Stomach (tissue), 19 donors: ENCODE measurements at regions of chr6 and their contacts with region 1.

Region 1: DNA sequence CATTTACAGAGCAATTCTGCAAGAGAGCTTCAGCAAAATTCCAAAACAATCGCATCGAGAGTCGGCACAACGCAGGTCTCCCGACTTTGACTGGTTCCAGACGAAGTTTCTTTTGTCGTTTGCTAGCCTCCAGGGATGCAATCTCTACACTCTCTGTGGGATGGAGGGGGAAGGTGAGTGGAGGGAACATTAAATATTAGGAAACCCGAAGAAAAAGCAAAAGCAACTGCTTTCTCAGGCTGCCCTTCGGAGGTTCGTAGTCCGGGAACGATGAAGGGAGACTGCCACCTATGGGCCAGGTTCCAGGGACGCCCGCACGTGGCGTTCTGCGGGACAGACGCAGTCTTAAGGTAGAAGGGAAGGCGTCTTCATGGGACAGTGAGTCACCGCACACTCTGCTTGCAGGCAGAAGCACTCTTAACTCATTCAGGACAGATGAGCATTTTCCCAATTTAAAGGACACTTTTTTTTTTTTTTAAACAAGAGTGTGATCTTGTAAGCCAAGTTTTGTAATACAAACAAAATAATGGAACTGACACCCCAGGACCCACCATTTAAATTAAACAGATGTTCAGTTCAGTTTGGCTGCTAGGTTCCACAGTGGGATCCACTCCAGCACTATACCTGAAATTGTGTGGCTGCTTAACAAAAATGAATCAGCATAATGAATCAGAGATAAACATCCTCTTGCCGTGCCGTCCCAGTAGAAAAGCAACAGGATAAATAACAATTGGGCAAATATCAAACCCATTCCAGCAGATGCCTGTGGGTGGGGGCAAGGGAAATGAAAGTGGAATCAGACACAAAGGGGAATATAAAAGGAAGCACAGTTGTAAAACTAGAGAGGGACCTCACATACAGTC is 65.8 kb upstream of the ARMC2 start:
- DNase-seq: peak; percentile 91 to 93
- H3K4me3 ChIP-seq: peak overlapping the region; percentile 46 to 56 (median 47)
- H3K27ac ChIP-seq: peak overlapping the region; percentile 47 to 79 (median 59)
- H3K4me1 ChIP-seq: peaks cover 7 to 23% (median 18%) of the 10 kb centered on the region in 4 donors
- H3K27me3 ChIP-seq: no peaks in the 10 kb centered on the region
- CTCF ChIP-seq: peak in 5 of 7 experiments; percentile 49 to 84 (median 83)
- EP300 ChIP-seq: no peak
- POLR2A ChIP-seq: no peak

Region 2: GRCh38 chr6:108549732-108550131 is 232.7 kb before region 1 on chr6:
- intact Hi-C with region 1: loop called (anchors 5 kb)
- DNase-seq: no peak
- H3K4me3 ChIP-seq: no peak overlapping the region
- H3K27ac ChIP-seq: no peak overlapping the region
- H3K4me1 ChIP-seq: peaks cover 0 to 4% (median 0%) of the 10 kb centered on the region in 4 donors
- H3K27me3 ChIP-seq: no peaks in the 10 kb centered on the region
- CTCF ChIP-seq: peak in 1 of 7 experiments; percentile 8
- EP300 ChIP-seq: no peak
- POLR2A ChIP-seq: no peak